ENCODE measurements at regions of chr18 and their contacts with region 1.

Region 1: GRCh38 chr18:9055185-9055584 is 47.3 kb upstream of the NDUFV2 start:
- DNase-seq: no peak
- H3K4me3 Mint-ChIP-seq: no peak overlapping the region
- H3K27ac Mint-ChIP-seq: no peak overlapping the region
- H3K4me1 Mint-ChIP-seq: peaks cover 8% of the 10 kb centered on the region
- H3K27me3 Mint-ChIP-seq: no peaks in the 10 kb centered on the region
- CTCF ChIP-seq: no peak

Region 2: GRCh38 chr18:8654503-8655451 is 400.4 kb before region 1 on chr18:
- CTCF ChIA-PET with region 1: no interaction called
- intact Hi-C with region 1: loop called (anchors 2 kb)
- DNase-seq: no peak
- H3K4me3 Mint-ChIP-seq: no peak overlapping the region
- H3K27ac Mint-ChIP-seq: no peak overlapping the region
- H3K4me1 Mint-ChIP-seq: no peaks in the 10 kb centered on the region
- H3K27me3 Mint-ChIP-seq: no peaks in the 10 kb centered on the region
- CTCF ChIP-seq: peak; percentile 59

Region 3: GRCh38 chr18:8962855-8963635 is 92.1 kb before region 1 on chr18:
- CTCF ChIA-PET with region 1: no interaction called
- intact Hi-C with region 1: no loop called
- DNase-seq: no peak
- H3K4me3 Mint-ChIP-seq: no peak overlapping the region
- H3K27ac Mint-ChIP-seq: peak overlapping the region; percentile 96
- H3K4me1 Mint-ChIP-seq: peaks cover 72% of the 10 kb centered on the region
- H3K27me3 Mint-ChIP-seq: no peaks in the 10 kb centered on the region
- CTCF ChIP-seq: no peak

Region 4: DNA sequence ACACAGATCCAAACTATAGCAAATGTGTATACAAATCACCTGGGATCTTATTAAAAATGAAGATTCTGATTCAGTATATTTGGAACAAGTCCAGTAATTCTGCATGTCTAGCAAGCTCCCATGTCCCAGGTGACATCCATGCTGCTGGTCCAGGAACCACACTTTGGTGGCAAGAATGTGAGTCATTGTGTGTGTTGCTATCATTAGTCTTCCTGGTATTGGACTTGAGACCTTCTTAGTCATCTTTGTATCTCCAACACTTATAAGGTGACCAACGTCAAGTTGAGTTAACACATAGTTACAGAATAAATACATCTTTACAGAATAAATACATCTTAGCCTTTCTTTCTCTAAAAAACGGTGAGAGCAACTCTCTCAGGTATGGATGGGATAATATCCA is 60.6 kb before region 1 on chr18:
- CTCF ChIA-PET with region 1: no interaction called
- intact Hi-C with region 1: loop called (anchors 2 kb)
- DNase-seq: peak; percentile 34
- H3K4me3 Mint-ChIP-seq: no peak overlapping the region
- H3K27ac Mint-ChIP-seq: no peak overlapping the region
- H3K4me1 Mint-ChIP-seq: peaks cover 51% of the 10 kb centered on the region
- H3K27me3 Mint-ChIP-seq: no peaks in the 10 kb centered on the region
- CTCF ChIP-seq: no peak